ENCODE measurements at regions of chr14 and their contacts with region 1.

Region 1: DNA sequence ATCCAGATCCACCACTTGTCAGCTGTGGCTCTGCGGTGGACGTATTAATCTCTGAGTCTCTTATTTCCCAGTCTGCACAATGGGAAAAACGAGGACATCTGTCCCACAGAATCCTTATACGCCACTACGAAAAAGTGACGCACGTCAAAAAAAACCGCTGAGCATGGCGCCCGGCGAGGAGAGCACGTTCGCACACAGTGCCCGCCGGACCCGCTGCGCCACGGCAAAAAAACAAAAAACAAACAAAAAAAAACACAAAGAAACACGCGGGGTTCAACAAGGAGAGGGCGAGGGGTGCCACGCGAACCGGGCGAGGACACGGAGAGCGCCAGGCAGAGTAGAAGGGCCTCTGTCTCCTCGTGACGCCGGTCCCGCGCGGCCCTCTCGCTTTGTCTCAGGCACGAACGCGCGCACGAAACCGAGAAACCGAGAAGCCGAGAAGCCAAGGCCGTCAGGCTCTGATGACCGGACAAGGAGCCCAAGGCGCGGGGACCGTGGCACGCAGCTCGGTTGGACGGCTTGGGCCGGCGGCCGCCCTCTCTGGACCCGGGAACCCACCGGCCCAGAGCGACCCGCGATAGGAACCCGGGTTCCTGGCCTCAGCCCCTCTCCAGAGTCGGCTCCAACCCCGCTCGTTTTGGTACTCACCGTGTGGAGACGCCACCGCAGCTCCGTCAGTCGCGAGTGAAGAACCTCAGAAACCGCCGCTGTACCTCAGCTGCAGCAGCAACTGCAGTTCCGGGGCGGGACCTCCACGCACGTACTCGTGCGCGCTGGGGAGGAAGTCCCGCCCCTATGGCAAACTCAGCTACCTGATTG is at the start of gene DDX24:
- DNase-seq: peak; percentile 98
- total RNA-seq, gene DDX24: 245 TPM

Region 2: GRCh38 chr14:93970549-93970946 is 110.1 kb before region 1 on chr14:
- intact Hi-C with region 1: no loop called
- DNase-seq: no peak

Region 3: DNA sequence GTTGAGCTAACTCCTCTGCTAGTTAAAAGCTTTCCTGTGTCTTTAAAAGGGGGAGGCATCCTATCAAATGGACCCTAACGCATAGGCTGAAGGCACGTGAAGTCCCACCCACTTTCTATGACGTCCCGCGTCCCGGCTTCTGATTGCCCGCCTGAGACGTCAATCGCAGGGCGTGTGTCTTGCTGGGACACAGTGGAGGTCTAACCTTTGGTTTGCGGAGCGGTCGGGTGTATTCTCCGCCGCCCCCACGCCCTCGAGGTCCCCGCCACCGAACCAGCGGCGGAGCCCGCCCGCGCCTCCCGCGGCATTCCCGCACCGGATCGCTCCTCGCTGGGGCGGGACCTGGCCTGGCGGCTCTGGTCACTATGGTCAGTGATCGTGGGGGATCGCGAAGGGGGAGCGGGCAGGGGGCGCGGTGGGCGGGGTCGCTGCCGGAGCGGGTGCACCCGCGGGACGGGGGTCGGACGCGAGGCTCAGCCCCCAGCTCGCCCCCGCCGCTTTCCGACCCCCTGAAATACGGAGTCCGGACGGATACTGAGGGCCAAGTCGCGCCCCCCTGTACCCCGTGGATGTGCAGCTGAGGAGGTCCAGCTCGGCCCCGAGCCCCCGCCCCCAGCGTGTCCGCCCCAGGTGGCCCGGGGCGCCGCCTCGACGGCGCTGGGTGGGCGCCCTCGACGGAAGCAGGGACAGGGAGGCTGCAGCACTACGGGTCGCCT is 54.3 kb before region 1 on chr14 and contains the start of gene OTUB2:
- intact Hi-C with region 1: no loop called
- DNase-seq: peak; percentile 98
- total RNA-seq, gene OTUB2: 0.30 TPM

Region 4: DNA sequence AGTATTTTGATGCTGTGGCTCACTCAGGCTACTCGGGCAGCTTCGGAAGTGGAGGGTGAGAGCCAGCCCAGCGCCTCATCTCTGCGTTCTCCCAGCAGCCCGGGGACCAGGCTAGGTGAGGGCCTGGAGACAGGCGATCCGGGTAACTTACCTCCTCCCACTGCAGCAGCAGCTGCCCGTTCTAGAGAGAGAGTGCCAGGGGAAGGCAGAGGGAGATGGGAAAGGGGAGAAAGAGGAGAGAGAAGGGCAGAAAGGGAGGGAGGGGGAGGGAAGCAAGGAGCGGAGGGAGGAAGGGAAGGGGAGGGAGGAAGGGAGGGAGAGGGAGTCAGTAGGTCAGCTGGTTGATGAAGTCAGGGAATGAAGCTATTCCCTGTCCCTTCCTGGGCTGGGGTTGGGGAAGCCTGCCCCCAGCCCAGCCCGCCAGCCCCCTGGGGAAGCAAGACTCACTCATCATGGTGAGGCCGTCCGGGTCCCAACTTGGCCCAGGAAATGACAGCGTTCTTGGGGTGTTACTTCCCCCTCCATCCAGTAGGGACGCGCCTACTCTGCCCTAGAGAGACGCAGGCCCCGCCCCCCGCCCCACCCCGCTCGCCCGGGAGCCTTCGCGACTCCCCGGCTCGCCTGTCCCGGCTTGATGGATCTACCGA is 48.6 kb after region 1 on chr14 and contains the start of gene IFI27L2:
- intact Hi-C with region 1: loop called (anchors 5 kb)
- DNase-seq: peak; percentile 88
- total RNA-seq, gene IFI27L2: 93.0 TPM

Measured in cardiac septum (tissue), 1 donor.